B cell (primary cell): ENCODE measurements at regions of chr11 and their contacts with region 1.

Region 1: DNA sequence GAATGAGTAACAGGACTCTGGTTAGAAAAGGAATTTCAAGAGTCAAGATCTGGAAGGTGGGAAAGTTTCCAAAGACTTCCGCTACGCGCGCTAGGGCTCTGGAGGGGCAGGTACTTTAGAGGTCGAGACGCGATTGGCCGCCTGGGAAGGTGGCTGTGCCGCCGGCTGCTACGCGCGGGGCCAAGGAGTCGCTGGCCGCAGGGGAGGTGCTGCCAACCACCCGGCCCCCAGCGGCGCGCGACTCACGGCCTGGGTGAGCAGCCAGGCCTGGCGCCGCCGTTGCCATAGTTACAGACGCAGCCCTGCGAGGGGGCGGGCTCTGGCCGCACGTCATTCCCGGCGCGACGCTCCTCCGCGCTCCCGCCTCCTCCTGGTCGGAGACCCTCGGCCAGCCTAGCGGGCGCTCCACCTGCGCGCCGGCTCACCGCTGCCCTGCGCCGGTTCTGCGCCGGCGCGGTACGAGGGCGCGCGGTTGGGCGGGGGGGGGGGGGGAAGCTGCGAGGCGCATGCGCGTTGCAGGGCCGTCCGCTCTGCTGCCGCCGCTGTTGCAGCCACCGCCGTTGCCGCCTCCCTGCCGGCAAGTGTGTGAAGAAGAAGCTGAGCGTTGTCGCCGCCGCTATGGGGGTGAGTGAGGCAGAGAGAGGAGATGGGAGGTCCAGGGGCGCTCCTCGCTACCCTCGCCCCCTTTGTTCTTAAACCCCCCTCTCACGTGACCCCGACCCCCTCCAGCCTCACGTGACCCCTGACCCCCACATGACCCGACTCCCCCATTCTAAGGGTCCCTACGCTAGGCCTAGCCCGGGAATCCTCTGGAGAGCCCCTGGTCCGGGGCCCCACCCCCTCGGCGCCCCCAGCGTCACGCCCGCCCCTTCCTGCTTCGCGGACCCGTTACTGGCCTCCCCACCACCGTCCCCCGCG is at the start of gene NAA40:
- DNase-seq: peak; percentile 98
- ATAC-seq: peak; percentile 87
- H3K4me3 ChIP-seq: peak within 1 kb of the TSS; percentile 65 to 98 (median 72)
- H3K4me3 Mint-ChIP-seq: peak within 1 kb of the TSS; percentile 88
- H3K27ac ChIP-seq: peak within 1 kb of the TSS; percentile 55 to 72
- H3K27ac Mint-ChIP-seq: peak within 1 kb of the TSS; percentile 82
- H3K4me1 ChIP-seq: peaks cover 27 to 35% of the 10 kb centered on the region in 2 donors
- H3K4me1 Mint-ChIP-seq: peaks cover 32% of the 10 kb centered on the region
- H3K27me3 ChIP-seq: no peaks in the 10 kb centered on the region
- H3K27me3 Mint-ChIP-seq: no peaks in the 10 kb centered on the region
- CTCF ChIP-seq: no peak
- total RNA-seq, gene NAA40: 41.3 and 52.1 TPM in 2 replicates

Region 2: GRCh38 chr11:63567044-63567840 is 371.5 kb before region 1 on chr11:
- CTCF ChIA-PET with region 1: no interaction called
- POLR2A ChIA-PET with region 1: no interaction called
- intact Hi-C with region 1: loop called (anchors 5 kb)
- DNase-seq: peak; percentile 97
- ATAC-seq: peak; percentile 81
- H3K4me3 ChIP-seq: peak overlapping the region in 3 of 5 experiments; percentile 21 to 59 (median 34)
- H3K4me3 Mint-ChIP-seq: peak overlapping the region; percentile 79
- H3K27ac ChIP-seq: peak overlapping the region; percentile 92 to 94
- H3K27ac Mint-ChIP-seq: peak overlapping the region; percentile 97
- H3K4me1 ChIP-seq: peaks cover 38 to 51% of the 10 kb centered on the region in 2 donors
- H3K4me1 Mint-ChIP-seq: peaks cover 44% of the 10 kb centered on the region
- H3K27me3 ChIP-seq: no peaks in the 10 kb centered on the region
- H3K27me3 Mint-ChIP-seq: peaks cover 4% of the 10 kb centered on the region
- CTCF ChIP-seq: no peak

Region 3: DNA sequence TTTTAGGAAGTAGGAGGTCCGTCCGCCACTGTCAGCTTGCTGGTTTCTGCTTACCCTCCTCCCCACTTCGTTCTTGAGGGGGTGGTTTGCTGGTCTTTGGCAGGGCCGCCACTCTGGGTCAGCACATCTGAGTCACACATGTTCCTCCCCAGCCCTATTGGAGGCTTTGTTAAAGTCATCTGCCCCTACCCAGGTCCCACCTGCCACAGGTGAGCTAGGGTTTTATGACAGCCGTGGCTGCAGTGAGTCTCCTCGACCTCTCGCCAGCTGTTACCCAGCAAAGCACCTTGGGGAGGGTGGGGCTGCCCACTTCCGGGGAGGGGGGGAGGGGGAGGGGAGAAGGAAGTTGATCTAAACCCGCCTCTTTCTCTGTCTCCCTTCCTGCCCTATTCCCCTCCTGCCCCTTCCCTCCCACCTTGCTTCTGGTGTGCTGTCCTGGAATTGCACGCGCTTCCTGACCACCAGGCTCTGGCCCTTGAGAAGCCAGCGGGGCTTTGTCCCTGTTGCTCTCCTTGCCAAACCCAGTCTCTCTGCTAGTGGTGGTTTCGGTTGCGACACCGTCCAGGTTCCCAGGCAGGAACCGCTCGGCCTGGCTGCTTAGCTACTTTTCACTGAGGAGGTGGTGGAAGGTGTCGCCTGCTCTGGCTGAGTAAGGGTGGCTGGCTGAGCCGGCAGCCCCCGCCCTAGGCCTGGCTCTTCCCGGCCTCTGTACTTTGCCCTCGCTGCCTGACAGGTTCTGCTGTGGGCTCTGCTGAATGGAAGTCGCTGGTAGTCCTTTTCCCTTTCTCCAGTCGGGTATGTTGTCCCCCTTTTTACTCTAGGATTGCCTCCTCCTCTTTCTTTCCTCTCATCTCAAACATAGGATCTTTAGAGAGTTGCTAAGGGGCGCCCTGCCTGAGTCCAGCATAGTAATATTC is 50.3 kb before region 1 on chr11:
- CTCF ChIA-PET with region 1: no interaction called
- POLR2A ChIA-PET with region 1: no interaction called
- intact Hi-C with region 1: loop called (anchors 2 kb)
- DNase-seq: peak; percentile 83
- ATAC-seq: peak; percentile 89
- H3K4me3 ChIP-seq: peak overlapping the region; percentile 36 to 88 (median 68)
- H3K4me3 Mint-ChIP-seq: peak overlapping the region; percentile 93
- H3K27ac ChIP-seq: peak overlapping the region; percentile 67 to 82
- H3K27ac Mint-ChIP-seq: peak overlapping the region; percentile 87
- H3K4me1 ChIP-seq: peaks cover 39 to 53% of the 10 kb centered on the region in 2 donors
- H3K4me1 Mint-ChIP-seq: peaks cover 72% of the 10 kb centered on the region
- H3K27me3 ChIP-seq: no peaks in the 10 kb centered on the region
- H3K27me3 Mint-ChIP-seq: no peaks in the 10 kb centered on the region
- CTCF ChIP-seq: no peak

Region 4: DNA sequence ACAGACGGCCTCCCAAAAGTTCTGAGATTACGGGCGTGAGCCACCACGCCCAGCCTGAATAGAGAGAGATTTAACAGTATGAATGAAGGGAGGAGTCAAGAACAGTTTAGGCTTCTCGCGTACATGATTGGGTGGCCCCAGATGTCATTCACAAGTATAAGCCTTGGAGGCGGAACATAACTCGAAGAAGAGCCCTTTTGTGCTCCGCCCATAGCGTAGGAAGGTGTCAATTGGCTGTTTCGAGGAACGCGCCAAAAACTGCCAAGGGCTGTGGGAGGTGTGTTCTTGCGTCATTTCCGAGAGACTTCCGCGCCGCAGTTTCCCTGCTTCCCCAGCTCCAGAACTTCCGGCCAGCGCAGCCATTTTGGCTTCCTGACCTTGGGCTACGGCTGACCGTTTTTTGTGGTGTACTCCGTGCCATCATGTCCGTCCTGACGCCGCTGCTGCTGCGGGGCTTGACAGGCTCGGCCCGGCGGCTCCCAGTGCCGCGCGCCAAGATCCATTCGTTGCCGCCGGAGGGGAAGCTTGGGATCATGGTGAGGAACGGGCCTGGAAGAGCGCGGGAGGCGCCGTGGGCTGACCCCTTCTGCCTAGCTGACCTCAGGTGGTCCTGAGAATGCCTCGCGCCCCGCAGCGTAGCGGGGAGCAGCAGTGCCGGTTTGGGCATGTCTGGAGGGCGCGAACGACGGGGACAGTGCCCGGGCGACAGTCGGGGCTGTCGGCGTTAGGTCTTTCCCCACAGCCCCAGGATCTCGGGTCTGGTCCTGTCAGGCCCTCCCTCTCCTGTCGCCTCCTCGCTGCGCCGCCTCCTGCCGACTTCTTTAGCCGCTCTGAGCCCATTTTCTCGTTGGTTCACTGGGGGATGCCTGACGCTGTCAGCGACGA is 35.8 kb after region 1 on chr11 and contains the start of gene COX8A:
- CTCF ChIA-PET with region 1: no interaction called
- POLR2A ChIA-PET with region 1: no interaction called
- intact Hi-C with region 1: loop called (anchors 1 kb)
- DNase-seq: peak; percentile 98
- ATAC-seq: peak; percentile 98
- H3K4me3 ChIP-seq: peak within 1 kb of the TSS; percentile 81 to 99 (median 94)
- H3K4me3 Mint-ChIP-seq: peak within 1 kb of the TSS; percentile 99
- H3K27ac ChIP-seq: peak within 1 kb of the TSS; percentile 83 to 94
- H3K27ac Mint-ChIP-seq: peak within 1 kb of the TSS; percentile 98
- H3K4me1 ChIP-seq: peaks cover 6 to 21% of the 10 kb centered on the region in 2 donors
- H3K4me1 Mint-ChIP-seq: peaks cover 29% of the 10 kb centered on the region
- H3K27me3 ChIP-seq: no peaks in the 10 kb centered on the region
- H3K27me3 Mint-ChIP-seq: peaks cover 3% of the 10 kb centered on the region
- CTCF ChIP-seq: no peak
- total RNA-seq, gene COX8A: 92.6 and 99.0 TPM in 2 replicates

Region 5: GRCh38 chr11:64152841-64153691 is 214.3 kb after region 1 on chr11:
- CTCF ChIA-PET with region 1: no interaction called
- POLR2A ChIA-PET with region 1: no interaction called
- intact Hi-C with region 1: loop called (anchors 1 kb)
- DNase-seq: peak; percentile 79
- ATAC-seq: peak; percentile 97
- H3K4me3 ChIP-seq: no peak overlapping the region
- H3K4me3 Mint-ChIP-seq: no peak overlapping the region
- H3K27ac ChIP-seq: no peak overlapping the region
- H3K27ac Mint-ChIP-seq: no peak overlapping the region
- H3K4me1 ChIP-seq: peaks cover 0 to 12% of the 10 kb centered on the region in 2 donors
- H3K4me1 Mint-ChIP-seq: peaks cover 2% of the 10 kb centered on the region
- H3K27me3 ChIP-seq: no peaks in the 10 kb centered on the region
- H3K27me3 Mint-ChIP-seq: no peaks in the 10 kb centered on the region
- CTCF ChIP-seq: peak; percentile 99